Lower leg skin (tissue), 4 donors: ENCODE measurements at regions of chr6 and their contacts with region 1.

Region 1: GRCh38 chr6:10411971-10412745 is 2.7 kb downstream of the TFAP2A start:
- DNase-seq: peak in 1 of 2 donors; percentile 90
- H3K4me3 ChIP-seq: peak overlapping the region; percentile 51
- CTCF ChIP-seq: no peak
- POLR2A ChIP-seq: no peak

Region 2: GRCh38 chr6:8983188-8983688 is 1428.9 kb before region 1 on chr6:
- intact Hi-C with region 1: loop called (anchors 10 kb)
- DNase-seq: peak; percentile 65 to 95
- H3K4me3 ChIP-seq: no peak overlapping the region
- CTCF ChIP-seq: peak in 1 of 3 donors; percentile 88
- POLR2A ChIP-seq: no peak

Region 3: DNA sequence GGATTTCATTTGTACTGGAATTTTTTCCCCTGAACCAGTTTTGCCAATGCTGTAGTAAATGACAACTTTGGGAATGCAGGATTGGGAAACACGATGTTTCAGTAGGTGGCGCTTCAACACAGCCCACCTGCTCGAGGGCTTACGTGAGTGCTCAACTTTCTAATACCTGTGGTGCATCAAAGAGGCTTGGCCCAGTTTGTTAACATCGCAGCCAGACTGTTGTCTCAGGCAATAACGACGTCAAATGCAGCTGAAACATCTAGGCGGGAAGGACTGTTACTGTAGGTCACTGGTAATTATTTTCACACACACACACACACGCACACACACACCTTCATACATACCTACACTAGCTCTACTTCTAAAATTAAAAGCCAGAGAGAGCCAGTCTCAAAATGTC is 1161.3 kb before region 1 on chr6:
- intact Hi-C with region 1: loop called (anchors 10 kb)
- DNase-seq: peak in 1 of 2 donors; percentile 44
- H3K4me3 ChIP-seq: no peak overlapping the region
- CTCF ChIP-seq: no peak
- POLR2A ChIP-seq: no peak

Region 4: GRCh38 chr6:9537381-9537780 is 874.8 kb before region 1 on chr6:
- intact Hi-C with region 1: loop called (anchors 10 kb)
- DNase-seq: no peak
- H3K4me3 ChIP-seq: no peak overlapping the region
- CTCF ChIP-seq: no peak
- POLR2A ChIP-seq: no peak